Activated T-helper 2 cell treated with anti-CD3 and anti-CD28 coated beads, Interferon-gamma antibody, Interleukin-2, Interleukin-4, amounts not matched to agents 10 μg/mL and 5 μg/mL and 100 μg/mL, durations not matched to agents 14 hours and 24 hours and 36 hours (primary cell): ENCODE measurements at regions of chr17 and their contacts with region 1.

Region 1: DNA sequence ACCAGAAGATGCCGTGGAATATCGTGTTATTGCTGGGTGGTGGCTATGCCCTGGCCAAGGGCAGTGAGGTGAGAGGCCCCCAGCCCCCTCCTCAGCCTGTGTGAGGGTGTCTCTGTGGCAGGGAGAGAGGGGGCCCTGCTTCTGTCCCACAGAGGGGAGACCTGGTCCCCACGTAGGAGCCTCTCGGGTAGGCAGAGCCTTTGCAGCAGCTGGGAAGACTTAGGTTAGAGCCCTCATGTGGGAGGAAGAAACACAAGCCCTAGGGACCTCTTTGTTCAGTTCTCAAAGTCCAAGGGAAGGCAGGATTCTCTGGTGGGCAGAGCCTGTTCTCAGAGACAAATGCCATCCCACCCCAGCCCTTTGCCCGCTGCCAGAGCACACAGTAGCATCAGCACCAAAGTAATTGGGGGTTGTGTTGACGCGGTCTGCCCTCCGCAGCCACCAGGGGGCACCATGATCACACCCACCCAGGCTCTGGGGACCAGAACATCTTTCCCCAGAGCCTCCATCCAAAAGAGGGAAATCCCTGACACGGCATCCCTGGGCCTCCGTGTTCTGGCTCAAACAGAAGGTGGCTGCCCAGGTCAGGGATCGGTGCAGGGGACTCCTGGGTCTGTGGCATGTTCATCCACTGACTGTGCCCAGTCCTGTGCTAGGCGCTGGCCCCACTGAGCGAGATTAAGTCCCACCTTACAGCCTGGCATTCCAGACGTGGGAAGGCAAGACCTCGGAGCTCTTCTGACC is 11.5 kb upstream of the FOXN1 start:
- DNase-seq: peak; percentile 65
- H3K4me3 Mint-ChIP-seq: no peak overlapping the region
- H3K27ac Mint-ChIP-seq: no peak overlapping the region
- H3K4me1 Mint-ChIP-seq: no peaks in the 10 kb centered on the region
- H3K27me3 Mint-ChIP-seq: peaks cover 6% of the 10 kb centered on the region

Region 2: GRCh38 chr17:28540231-28540630 is 45.6 kb after region 1 on chr17:
- intact Hi-C with region 1: loop called (anchors 1 kb)
- DNase-seq: no peak
- H3K4me3 Mint-ChIP-seq: no peak overlapping the region
- H3K27ac Mint-ChIP-seq: no peak overlapping the region
- H3K4me1 Mint-ChIP-seq: no peaks in the 10 kb centered on the region
- H3K27me3 Mint-ChIP-seq: no peaks in the 10 kb centered on the region

Region 3: GRCh38 chr17:28612936-28613872 is 118.6 kb after region 1 on chr17:
- intact Hi-C with region 1: loop called (anchors 10 kb)
- DNase-seq: no peak
- H3K4me3 Mint-ChIP-seq: no peak overlapping the region
- H3K27ac Mint-ChIP-seq: no peak overlapping the region
- H3K4me1 Mint-ChIP-seq: no peaks in the 10 kb centered on the region
- H3K27me3 Mint-ChIP-seq: no peaks in the 10 kb centered on the region